Activated CD4-positive, alpha-beta T cell treated with anti-CD3 and anti-CD28 coated beads for 36 hours (primary cell): ENCODE measurements at regions of chr10 and their contacts with region 1.

Region 1: DNA sequence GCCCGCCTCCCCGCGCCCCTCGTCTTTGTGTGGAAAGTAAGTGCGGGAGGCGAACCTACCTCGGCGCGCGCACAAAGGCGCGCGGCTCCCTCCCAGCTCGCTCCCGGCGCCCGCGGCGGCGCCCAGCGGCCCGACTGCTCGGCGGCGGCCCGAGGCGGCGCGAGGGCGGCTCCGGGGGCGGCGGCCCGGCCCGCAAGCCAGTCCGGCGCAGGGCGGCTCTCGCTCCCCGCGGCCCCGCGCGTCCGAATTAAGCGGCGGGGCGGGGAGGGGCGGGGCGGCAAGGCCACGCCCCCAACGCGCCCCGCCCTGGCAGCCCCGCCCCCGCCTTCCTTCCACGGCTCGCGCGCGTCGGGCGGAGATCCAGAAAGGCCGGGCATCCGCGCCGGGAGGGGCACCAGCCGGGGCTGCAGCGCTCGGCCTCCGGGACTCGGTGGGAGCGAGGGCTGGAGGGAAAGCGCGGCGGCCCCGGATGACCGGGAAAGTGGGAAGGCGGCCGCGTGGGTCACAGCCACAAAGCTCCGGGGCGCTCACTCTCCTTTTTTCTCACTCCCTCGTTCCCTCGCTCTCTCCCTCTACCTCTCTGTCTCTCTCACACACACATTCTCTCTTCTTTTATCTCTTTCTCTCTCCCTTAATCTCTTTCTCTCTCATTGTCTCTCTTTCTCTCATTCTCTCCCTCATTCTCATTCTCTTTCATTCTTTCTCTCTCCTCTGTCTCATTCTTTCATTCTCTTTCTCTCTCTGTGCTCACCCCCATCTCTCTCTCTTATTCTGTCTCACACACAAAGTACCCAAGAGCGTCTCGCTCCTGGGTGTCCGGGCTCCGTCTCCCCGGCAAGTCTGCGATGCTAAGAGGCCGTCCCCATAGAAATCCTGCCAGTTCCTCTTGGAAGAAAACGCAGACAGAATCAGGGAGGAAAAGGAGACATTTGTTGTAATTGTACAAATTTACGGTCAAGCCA is 170.2 kb downstream of the FAM107B start:
- DNase-seq: peak; percentile 87
- ATAC-seq: peak; percentile 40
- H3K4me3 Mint-ChIP-seq: peak overlapping the region; percentile 85
- H3K27ac Mint-ChIP-seq: peak overlapping the region; percentile 99
- H3K4me1 Mint-ChIP-seq: peaks cover 72% of the 10 kb centered on the region
- H3K27me3 Mint-ChIP-seq: no peaks in the 10 kb centered on the region

Region 2: GRCh38 chr10:14385596-14386593 is 218.6 kb before region 1 on chr10:
- CTCF ChIA-PET with region 1: no interaction called
- POLR2A ChIA-PET with region 1: no interaction called
- intact Hi-C with region 1: loop called in 1 of 2 experiments (anchors 1 kb)
- DNase-seq: peak; percentile 78
- ATAC-seq: peak; percentile 74
- H3K4me3 Mint-ChIP-seq: no peak overlapping the region
- H3K27ac Mint-ChIP-seq: no peak overlapping the region
- H3K4me1 Mint-ChIP-seq: peaks cover 74% of the 10 kb centered on the region
- H3K27me3 Mint-ChIP-seq: peaks cover 13% of the 10 kb centered on the region

Region 3: DNA sequence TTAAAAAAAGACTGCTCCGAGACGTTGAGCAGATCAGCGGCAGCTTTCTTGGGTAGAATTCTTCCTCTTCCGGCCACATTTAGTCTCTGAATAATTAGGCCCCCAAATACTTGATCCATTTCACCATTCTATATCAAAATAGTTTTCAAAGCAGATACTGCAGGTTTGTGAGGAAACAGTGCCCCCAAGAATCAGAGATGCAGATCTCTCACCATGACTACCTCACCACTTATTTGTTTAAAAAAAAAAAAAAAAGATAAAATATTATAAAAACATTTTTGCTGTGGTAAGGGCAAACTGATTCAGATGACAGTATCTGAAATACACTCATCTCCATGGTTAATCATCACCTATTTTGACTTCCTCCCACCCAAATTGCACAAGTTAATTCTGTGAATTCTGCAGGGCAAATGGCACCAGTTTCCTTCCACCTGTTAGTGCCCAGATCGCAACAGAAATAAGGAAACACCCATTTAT is 40.2 kb before region 1 on chr10:
- CTCF ChIA-PET with region 1: interaction called, 6 read pairs
- POLR2A ChIA-PET with region 1: interaction called, 4 read pairs
- intact Hi-C with region 1: loop called (anchors 1 to 2 kb)
- DNase-seq: no peak
- ATAC-seq: peak; percentile 40
- H3K4me3 Mint-ChIP-seq: peak overlapping the region; percentile 67
- H3K27ac Mint-ChIP-seq: peak overlapping the region; percentile 96
- H3K4me1 Mint-ChIP-seq: peaks cover 92% of the 10 kb centered on the region
- H3K27me3 Mint-ChIP-seq: no peaks in the 10 kb centered on the region

Region 4: GRCh38 chr10:14659626-14660196 is 55.2 kb after region 1 on chr10:
- CTCF ChIA-PET with region 1: no interaction called
- POLR2A ChIA-PET with region 1: no interaction called
- intact Hi-C with region 1: loop called (anchors 1 kb)
- DNase-seq: peak; percentile 71
- ATAC-seq: peak; percentile 80
- H3K4me3 Mint-ChIP-seq: peak overlapping the region; percentile 60
- H3K27ac Mint-ChIP-seq: peak overlapping the region; percentile 92
- H3K4me1 Mint-ChIP-seq: peaks cover 82% of the 10 kb centered on the region
- H3K27me3 Mint-ChIP-seq: no peaks in the 10 kb centered on the region

Region 5: DNA sequence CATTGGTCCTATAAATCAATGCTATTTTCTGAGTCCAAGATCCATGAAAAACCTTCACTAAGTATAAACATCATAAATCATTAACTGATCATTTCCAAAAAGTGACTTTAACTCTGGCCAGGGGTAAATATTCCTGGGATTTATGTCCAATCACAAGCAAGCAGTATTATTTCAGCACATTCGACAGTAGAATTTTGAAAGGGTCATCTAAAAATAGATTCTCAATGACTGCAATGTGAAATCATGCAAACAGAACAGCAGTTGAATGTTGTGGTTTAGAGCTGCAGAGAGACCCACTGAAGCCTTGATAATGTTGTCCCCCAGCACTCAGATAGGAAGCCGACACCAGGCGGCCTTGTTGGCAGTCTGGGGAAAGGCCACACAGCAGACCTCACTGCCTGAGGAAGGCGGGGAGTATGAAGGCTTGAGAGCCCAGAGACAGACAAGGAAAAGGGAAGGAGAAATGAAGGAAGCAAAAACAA is 132.2 kb after region 1 on chr10:
- CTCF ChIA-PET with region 1: no interaction called
- POLR2A ChIA-PET with region 1: no interaction called
- intact Hi-C with region 1: no loop called
- DNase-seq: no peak
- ATAC-seq: no peak
- H3K4me3 Mint-ChIP-seq: no peak overlapping the region
- H3K27ac Mint-ChIP-seq: no peak overlapping the region
- H3K4me1 Mint-ChIP-seq: peaks cover 8% of the 10 kb centered on the region
- H3K27me3 Mint-ChIP-seq: no peaks in the 10 kb centered on the region

Region 6: GRCh38 chr10:14782691-14783363 is 178.4 kb after region 1 on chr10:
- CTCF ChIA-PET with region 1: no interaction called
- POLR2A ChIA-PET with region 1: no interaction called
- intact Hi-C with region 1: no loop called
- DNase-seq: peak; percentile 17
- ATAC-seq: peak; percentile 81
- H3K4me3 Mint-ChIP-seq: no peak overlapping the region
- H3K27ac Mint-ChIP-seq: no peak overlapping the region
- H3K4me1 Mint-ChIP-seq: peaks cover 7% of the 10 kb centered on the region
- H3K27me3 Mint-ChIP-seq: no peaks in the 10 kb centered on the region

Region 7: DNA sequence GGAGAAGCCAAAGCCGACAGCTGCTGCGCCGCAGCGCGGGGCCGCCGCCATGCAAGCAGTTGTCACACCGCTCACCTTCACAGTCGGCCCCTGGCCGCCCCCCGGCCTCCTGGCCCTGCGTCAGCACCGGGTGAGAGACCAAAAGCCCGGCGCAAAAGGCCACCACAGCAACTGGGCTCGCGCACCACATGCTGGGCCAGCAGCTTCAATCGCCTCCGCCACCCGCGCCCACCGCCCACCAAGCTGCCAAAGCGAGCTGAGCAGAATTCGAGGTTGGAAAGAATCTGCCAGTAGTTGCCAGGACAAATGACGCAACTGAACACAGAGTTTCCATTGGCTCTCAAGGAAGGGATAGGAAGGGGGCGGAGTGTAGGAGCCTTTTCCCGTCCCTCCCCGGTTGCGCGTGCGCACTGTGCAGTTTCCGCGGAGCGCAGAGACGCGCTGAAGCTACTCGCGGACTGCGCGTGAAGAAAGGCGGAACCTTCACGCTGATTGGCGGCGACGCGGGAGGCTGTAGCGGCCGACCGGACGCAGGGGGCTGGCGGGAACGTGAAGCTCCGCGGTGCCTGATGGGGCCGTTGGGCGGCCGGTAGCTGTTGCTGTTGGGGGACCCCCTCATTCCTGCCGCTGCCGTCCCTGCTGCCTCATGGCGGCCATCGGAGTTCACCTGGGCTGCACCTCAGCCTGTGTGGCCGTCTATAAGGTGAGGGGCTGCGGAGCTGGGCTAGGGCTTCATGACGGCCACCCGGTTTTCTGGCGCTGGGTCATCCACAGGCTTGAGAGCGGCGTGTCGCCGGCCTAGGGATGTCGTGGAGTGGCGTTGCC is 233.5 kb after region 1 on chr10 and contains the starts of genes CDNF, HSPA14 and MSANTD7:
- CTCF ChIA-PET with region 1: interaction called, 5 read pairs
- POLR2A ChIA-PET with region 1: interaction called, 8 read pairs
- intact Hi-C with region 1: loop called (anchors 1 kb)
- DNase-seq: peak; percentile 100
- ATAC-seq: peak; percentile 97
- H3K4me3 Mint-ChIP-seq: peak within 1 kb of the TSS; percentile 89
- H3K27ac Mint-ChIP-seq: peak within 1 kb of the TSS; percentile 94
- H3K4me1 Mint-ChIP-seq: peaks cover 18% of the 10 kb centered on the region
- H3K27me3 Mint-ChIP-seq: no peaks in the 10 kb centered on the region
- total RNA-seq, gene CDNF: 2.5 to 2.7 TPM
- total RNA-seq, gene HSPA14: 26.1 to 36.0 TPM
- total RNA-seq, gene MSANTD7: 19.2 to 22.9 TPM

Region 8: GRCh38 chr10:15122477-15123030 is 518.1 kb after region 1 on chr10:
- CTCF ChIA-PET with region 1: no interaction called
- POLR2A ChIA-PET with region 1: no interaction called
- intact Hi-C with region 1: loop called in 1 of 2 experiments (anchors 10 kb)
- DNase-seq: peak; percentile 47
- ATAC-seq: peak; percentile 72
- H3K4me3 Mint-ChIP-seq: peak overlapping the region; percentile 40
- H3K27ac Mint-ChIP-seq: peak overlapping the region; percentile 92
- H3K4me1 Mint-ChIP-seq: peaks cover 36% of the 10 kb centered on the region
- H3K27me3 Mint-ChIP-seq: no peaks in the 10 kb centered on the region